ENCODE measurements at regions of chr6 and their contacts with region 1.

Region 1: DNA sequence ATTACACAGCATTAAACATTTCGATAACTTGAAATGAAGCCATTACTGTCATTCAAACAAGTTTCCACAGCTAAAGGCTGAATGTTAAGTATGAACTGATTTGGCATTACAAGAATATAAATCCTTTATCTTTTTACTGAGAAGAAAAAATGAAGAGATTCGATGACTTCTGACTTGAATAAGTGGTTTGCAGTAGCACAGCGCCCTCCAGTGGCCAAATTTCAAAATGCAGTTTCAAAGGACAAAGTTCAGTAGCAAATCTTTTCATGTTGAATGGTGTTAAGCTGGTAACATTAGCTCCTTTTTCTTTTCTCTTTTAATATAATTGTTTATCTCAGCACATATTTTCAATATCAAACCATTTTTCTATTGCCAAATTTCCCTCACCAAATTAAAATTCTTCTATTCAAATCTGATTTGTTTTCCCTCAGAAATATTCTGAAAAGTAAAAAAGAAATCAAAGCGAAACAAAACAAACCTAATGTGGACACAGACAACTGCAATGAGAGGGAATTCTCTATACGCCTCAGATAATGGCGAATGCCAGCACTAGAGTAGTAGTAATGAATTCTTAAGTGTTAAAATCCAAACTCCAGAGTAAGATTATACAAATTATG is 145.7 kb downstream of the BTBD9 start:
- DNase-seq: no peak
- ATAC-seq: peak; percentile 20

Region 2: DNA sequence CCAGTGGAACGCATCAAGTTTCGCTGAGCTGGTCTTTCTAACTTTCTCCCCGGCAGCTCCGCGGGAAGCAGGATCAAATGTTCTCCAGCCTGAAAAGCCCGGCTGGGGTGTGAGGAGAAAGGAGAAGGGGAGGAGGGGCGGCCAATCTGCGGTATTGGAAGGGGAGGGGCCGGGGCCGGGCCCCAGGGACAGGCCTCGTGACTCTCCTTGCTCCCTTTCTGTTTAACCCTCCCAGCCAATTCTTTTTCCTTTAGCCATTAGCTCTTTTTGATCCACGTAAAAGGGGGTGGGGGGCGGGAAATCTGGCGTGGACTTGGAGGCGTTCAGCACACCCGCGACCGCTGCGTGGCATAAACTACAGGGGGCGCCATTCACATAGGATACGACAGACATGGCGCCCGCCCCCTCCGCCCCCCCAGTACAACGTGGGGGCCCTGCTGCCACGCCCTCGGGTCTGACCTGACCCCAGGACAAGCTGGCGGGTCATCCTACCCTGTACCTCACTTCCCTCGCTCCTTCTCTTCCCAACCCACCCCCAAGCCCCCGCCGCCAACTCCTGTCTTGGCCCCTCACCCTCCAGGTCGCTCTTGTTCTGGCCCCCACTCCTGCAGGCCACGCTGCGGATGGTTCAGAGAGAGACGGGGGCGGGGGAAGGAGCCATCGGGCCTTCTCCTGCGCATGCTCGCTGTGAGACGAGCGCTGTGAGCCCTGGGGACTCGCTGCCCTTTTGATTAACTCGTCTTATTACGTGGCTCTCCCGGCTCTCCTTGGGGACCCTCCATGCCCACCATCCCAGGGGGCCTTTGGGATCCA is 788.6 kb before region 1 on chr6:
- intact Hi-C with region 1: loop called (anchors 10 kb)
- DNase-seq: peak; percentile 91
- ATAC-seq: peak; percentile 92

Region 3: GRCh38 chr6:38034274-38034914 is 459.6 kb before region 1 on chr6:
- intact Hi-C with region 1: loop called (anchors 5 kb)
- DNase-seq: no peak
- ATAC-seq: no peak

Measured in Right ventricle myocardium inferior (tissue), 1 donor.